SK-N-SH (cell line): ENCODE measurements at regions of chr6 and their contacts with region 1.

Region 1: GRCh38 chr6:41602864-41603608 is 35.2 kb upstream of the MDFI start:
- DNase-seq: peak; percentile 90
- H3K4me3 ChIP-seq: peak overlapping the region; percentile 17 to 54; a peak in 3 of 4 replicates
- H3K27ac ChIP-seq: peak overlapping the region; percentile 3 to 36; a peak in 1 of 4 replicates
- H3K4me1 ChIP-seq: peaks cover 0 to 7% of the 10 kb centered on the region in 2 experiments; a peak in 1 of 4 replicates
- H3K27me3 ChIP-seq: no peaks in the 10 kb centered on the region
- CTCF ChIP-seq: peak; percentile 95
- EP300 ChIP-seq: no peak
- RAD21 ChIP-seq: peak; percentile 93

Region 2: GRCh38 chr6:41352396-41352795 is 250.6 kb before region 1 on chr6:
- CTCF ChIA-PET with region 1: no interaction called
- POLR2A ChIA-PET with region 1: no interaction called
- DNase-seq: no peak
- H3K4me3 ChIP-seq: no peak overlapping the region
- H3K27ac ChIP-seq: no peak overlapping the region
- H3K4me1 ChIP-seq: no peaks in the 10 kb centered on the region
- H3K27me3 ChIP-seq: peaks cover 24% of the 10 kb centered on the region; the same call in 1 of the 2 replicates
- CTCF ChIP-seq: no peak
- EP300 ChIP-seq: no peak
- RAD21 ChIP-seq: no peak

Region 3: DNA sequence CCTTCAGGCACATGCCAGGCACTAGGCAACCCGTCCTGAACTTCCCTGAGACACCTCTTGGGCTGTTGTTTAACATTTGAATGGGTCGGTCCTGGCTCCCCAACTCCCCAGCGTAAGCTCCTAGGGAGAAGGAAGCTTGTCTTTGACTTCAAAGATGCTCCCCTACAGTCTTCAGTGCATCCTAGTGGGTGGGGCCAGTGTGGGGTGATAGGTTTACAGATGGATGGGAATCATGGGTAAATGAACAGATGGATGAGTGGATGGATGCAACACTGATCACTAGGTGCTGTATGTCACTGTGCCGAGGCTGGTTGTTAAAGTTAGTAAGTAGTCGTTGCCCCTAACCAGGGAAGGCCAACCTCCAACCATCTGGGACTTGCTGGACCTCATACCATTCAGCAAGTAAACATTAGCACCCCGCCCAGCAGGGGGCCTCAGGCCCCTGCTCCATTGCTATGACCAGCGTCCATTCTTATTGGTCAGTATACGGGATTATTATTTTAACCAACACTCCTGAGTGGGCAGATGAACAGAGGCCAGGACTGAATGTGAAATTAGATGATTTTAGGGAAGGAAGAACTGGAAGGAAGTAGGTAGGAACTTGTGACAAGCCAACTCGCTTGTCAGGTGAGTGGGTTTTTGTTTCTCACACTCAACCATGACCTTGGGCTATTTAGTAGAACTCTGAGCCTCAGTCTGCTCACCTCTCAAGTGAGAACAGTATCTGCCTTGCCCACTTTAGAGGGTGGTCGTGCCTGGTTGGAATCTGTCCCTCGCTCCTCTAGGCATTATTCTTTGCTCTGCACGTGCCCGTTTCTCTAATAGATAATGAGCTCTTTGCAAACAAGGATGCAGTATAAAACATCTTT is 139.7 kb before region 1 on chr6:
- CTCF ChIA-PET with region 1: interaction called, 29 read pairs
- POLR2A ChIA-PET with region 1: no interaction called
- DNase-seq: peak; percentile 83
- H3K4me3 ChIP-seq: no peak overlapping the region; a peak in 1 of 4 replicates
- H3K27ac ChIP-seq: no peak overlapping the region
- H3K4me1 ChIP-seq: peaks cover 0 to 5% of the 10 kb centered on the region in 2 experiments; a peak in 1 of 4 replicates
- H3K27me3 ChIP-seq: no peaks in the 10 kb centered on the region
- CTCF ChIP-seq: peak; percentile 71
- EP300 ChIP-seq: no peak
- RAD21 ChIP-seq: peak; percentile 93

Region 4: GRCh38 chr6:41615254-41615653 is 12.2 kb after region 1 on chr6:
- CTCF ChIA-PET with region 1: interaction called, 20 read pairs
- POLR2A ChIA-PET with region 1: no interaction called
- DNase-seq: no peak
- H3K4me3 ChIP-seq: no peak overlapping the region
- H3K27ac ChIP-seq: no peak overlapping the region
- H3K4me1 ChIP-seq: no peaks in the 10 kb centered on the region
- H3K27me3 ChIP-seq: no peaks in the 10 kb centered on the region
- CTCF ChIP-seq: no peak
- EP300 ChIP-seq: no peak
- RAD21 ChIP-seq: no peak

Region 5: GRCh38 chr6:41647061-41647511 is 44.0 kb after region 1 on chr6:
- CTCF ChIA-PET with region 1: interaction called, 18 read pairs
- POLR2A ChIA-PET with region 1: no interaction called
- DNase-seq: no peak
- H3K4me3 ChIP-seq: no peak overlapping the region
- H3K27ac ChIP-seq: no peak overlapping the region
- H3K4me1 ChIP-seq: peaks cover 4 to 15% of the 10 kb centered on the region in 2 experiments; a peak in 2 of 4 replicates
- H3K27me3 ChIP-seq: no peaks in the 10 kb centered on the region
- CTCF ChIP-seq: no peak
- EP300 ChIP-seq: no peak
- RAD21 ChIP-seq: no peak

Region 6: GRCh38 chr6:41675176-41675770 is 72.2 kb after region 1 on chr6:
- CTCF ChIA-PET with region 1: interaction called, 504 read pairs
- POLR2A ChIA-PET with region 1: no interaction called
- DNase-seq: peak; percentile 84
- H3K4me3 ChIP-seq: no peak overlapping the region
- H3K27ac ChIP-seq: peak overlapping the region in 1 of 2 experiments; percentile 35; a peak in 2 of 4 replicates
- H3K4me1 ChIP-seq: peaks cover 0 to 13% of the 10 kb centered on the region in 2 experiments; a peak in 1 of 4 replicates
- H3K27me3 ChIP-seq: no peaks in the 10 kb centered on the region; the same call in 1 of the 2 replicates
- CTCF ChIP-seq: no peak
- EP300 ChIP-seq: 0 out of 4 replicates have a peak, but pooled peaks of 1 of the 2 experiments have one; percentile 35
- RAD21 ChIP-seq: peak; percentile 28; the same call in 1 of the 2 replicates